A673 (cell line): ENCODE measurements at regions of chr7 and their contacts with region 1.

Region 1: GRCh38 chr7:56026538-56026937 is 24.7 kb downstream of the PSPH start:
- DNase-seq: no peak
- H3K4me3 ChIP-seq: no peak overlapping the region
- H3K27ac ChIP-seq: no peak overlapping the region
- H3K4me1 ChIP-seq: no peaks in the 10 kb centered on the region
- H3K27me3 ChIP-seq: no peaks in the 10 kb centered on the region
- CTCF ChIP-seq: no peak

Region 2: DNA sequence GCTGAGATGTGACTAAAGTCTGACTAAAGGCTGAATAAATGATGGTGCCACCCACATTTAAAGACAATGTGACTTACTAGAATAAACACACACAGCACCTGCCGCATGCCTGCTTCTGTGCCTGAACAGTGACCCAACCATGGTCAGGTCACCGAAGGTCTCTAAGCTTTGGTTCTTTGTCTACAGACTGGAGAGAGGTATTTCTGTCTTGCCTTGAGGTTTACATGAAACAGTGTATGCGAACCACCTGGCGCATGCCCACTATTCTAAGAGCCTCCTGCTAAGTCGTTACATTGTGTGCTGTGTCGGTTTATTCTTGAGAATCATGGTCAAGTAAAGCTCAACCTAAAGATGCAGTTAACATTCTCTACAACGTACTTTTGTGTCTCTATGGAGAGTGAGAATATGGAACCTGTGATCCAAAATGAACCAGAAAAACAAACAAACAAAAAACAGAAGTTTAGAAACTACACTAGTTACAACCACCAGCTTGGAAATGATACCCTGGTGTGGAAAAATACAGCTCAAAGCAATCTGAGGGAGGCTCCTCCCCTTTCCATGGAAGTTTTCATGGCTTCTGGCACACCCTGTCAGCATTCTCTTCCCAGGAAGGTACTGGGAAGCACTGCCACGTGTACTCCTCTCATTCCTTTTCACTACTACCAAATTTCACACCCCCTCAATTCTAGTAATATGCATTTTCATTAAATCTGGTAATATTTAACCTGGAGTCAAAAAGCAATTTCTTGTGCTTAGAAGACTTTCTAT is 494.2 kb before region 1 on chr7:
- CTCF ChIA-PET with region 1: no interaction called
- POLR2A ChIA-PET with region 1: interaction called, 14 read pairs
- intact Hi-C with region 1: no loop called
- DNase-seq: no peak
- H3K4me3 ChIP-seq: no peak overlapping the region
- H3K27ac ChIP-seq: no peak overlapping the region
- H3K4me1 ChIP-seq: peaks cover 27% of the 10 kb centered on the region
- H3K27me3 ChIP-seq: no peaks in the 10 kb centered on the region
- CTCF ChIP-seq: no peak

Region 3: GRCh38 chr7:56040734-56041133 is 14.2 kb after region 1 on chr7:
- CTCF ChIA-PET with region 1: no interaction called
- POLR2A ChIA-PET with region 1: no interaction called
- intact Hi-C with region 1: no loop called
- DNase-seq: no peak
- H3K4me3 ChIP-seq: no peak overlapping the region
- H3K27ac ChIP-seq: no peak overlapping the region
- H3K4me1 ChIP-seq: no peaks in the 10 kb centered on the region
- H3K27me3 ChIP-seq: no peaks in the 10 kb centered on the region
- CTCF ChIP-seq: no peak

Region 4: GRCh38 chr7:56290548-56290947 is 264.0 kb after region 1 on chr7:
- CTCF ChIA-PET with region 1: no interaction called
- POLR2A ChIA-PET with region 1: no interaction called
- intact Hi-C with region 1: no loop called
- DNase-seq: no peak
- H3K4me3 ChIP-seq: no peak overlapping the region
- H3K27ac ChIP-seq: no peak overlapping the region
- H3K4me1 ChIP-seq: no peaks in the 10 kb centered on the region
- H3K27me3 ChIP-seq: no peaks in the 10 kb centered on the region
- CTCF ChIP-seq: no peak